ENCODE measurements at regions of chr9 and their contacts with region 1.

Region 1: DNA sequence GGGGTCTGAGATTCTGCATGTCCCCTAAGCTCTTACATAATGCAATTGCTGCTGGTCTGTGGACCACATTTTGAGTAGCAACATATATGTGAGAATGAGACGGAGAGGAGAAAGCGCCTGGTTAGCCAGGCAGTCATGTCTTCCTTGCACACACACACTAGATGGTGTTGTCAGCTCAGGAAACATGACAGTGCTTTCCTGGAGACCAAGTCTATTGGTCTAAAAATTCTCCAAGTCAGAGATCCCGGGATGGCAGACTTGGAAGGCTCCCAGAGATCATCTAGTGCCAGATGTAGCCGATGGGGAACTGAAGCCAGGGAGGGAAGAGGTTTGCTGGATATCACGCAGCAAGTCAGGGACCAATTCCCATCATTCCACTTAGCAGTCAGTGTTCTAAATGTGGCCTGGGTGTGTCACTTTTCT is 53.4 kb downstream of the GALNT12 start:
- DNase-seq: peak; percentile 55 to 88
- ATAC-seq: peak; percentile 69 to 91 (median 88)
- H3K4me3 ChIP-seq: no peak overlapping the region
- H3K27ac ChIP-seq: peak overlapping the region in 8 of 10 donors; percentile 20 to 90 (median 82)
- H3K4me1 ChIP-seq: peaks cover 2 to 64% (median 45%) of the 10 kb centered on the region in 9 donors
- H3K27me3 ChIP-seq: no peaks in the 10 kb centered on the region
- CTCF ChIP-seq: peak; percentile 17 to 89 (median 65)

Region 2: GRCh38 chr9:98906262-98907040 is 45.6 kb after region 1 on chr9:
- intact Hi-C with region 1: loop called in 4 of 10 experiments (anchors 5 to 10 kb)
- DNase-seq: peak; percentile 55 to 73
- ATAC-seq: peak in 2 of 8 donors; percentile 47 to 62
- H3K4me3 ChIP-seq: no peak overlapping the region
- H3K27ac ChIP-seq: peak overlapping the region in 9 of 10 donors; percentile 12 to 86 (median 75)
- H3K4me1 ChIP-seq: peaks cover 16 to 71% (median 50%) of the 10 kb centered on the region in 9 donors
- H3K27me3 ChIP-seq: no peaks in the 10 kb centered on the region
- CTCF ChIP-seq: no peak

Region 3: DNA sequence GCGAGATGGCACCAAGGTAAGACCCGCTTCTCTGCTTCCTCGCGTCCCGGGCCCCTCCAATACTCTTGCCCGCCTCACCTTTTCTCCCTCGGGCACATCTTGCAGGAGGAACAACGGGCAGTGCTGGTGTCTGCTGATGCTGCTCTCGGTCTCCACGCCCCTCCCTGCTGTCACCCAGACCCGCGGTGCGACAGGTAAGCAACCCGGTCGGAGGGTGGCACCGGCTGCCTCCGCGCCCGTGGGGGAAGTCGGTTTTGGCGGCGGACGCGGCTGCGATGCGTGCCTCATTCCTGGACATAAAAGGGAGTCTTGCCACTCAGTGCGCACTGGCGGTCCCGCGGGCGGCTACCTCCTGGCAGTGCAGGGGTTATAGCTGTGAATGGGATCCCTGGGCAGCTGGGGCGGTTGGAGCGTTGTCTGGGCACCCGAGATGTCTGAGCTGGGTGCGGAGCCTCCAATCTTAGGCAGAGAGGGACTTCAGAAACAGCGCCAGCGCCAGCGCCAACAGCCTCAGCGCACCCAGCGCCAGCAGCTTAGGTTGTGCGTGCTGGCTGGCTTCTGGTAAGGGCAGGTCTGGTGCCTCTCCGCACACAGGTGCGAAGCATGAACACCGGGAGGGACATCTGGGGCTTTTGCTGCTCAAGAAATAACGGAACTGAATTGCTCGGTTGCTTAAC is 83.3 kb after region 1 on chr9:
- intact Hi-C with region 1: loop called in 1 of 10 experiments (anchors 10 kb)
- DNase-seq: peak in 1 of 2 donors; percentile 34
- ATAC-seq: peak; percentile 21 to 61 (median 48)
- H3K4me3 ChIP-seq: peak overlapping the region; percentile 54 to 88 (median 74)
- H3K27ac ChIP-seq: peak overlapping the region; percentile 62 to 96 (median 86)
- H3K4me1 ChIP-seq: peaks cover 3 to 87% (median 35%) of the 10 kb centered on the region in 9 donors
- H3K27me3 ChIP-seq: peaks cover 0 to 53% (median 0%) of the 10 kb centered on the region in 7 donors
- CTCF ChIP-seq: no peak

Region 4: GRCh38 chr9:98998441-98999151 is 137.7 kb after region 1 on chr9:
- intact Hi-C with region 1: loop called in 9 of 10 experiments (anchors 1 to 10 kb)
- DNase-seq: peak; percentile 89 to 91
- ATAC-seq: peak; percentile 82 to 92 (median 88)
- H3K4me3 ChIP-seq: peak overlapping the region in 1 of 10 donors; percentile 10
- H3K27ac ChIP-seq: peak overlapping the region; percentile 58 to 92 (median 79)
- H3K4me1 ChIP-seq: peaks cover 26 to 75% (median 67%) of the 10 kb centered on the region in 9 donors
- H3K27me3 ChIP-seq: peaks cover 0 to 5% (median 0%) of the 10 kb centered on the region in 7 donors
- CTCF ChIP-seq: peak; percentile 82 to 97 (median 93)

Region 5: GRCh38 chr9:99130069-99130468 is 269.2 kb after region 1 on chr9:
- intact Hi-C with region 1: loop called in 1 of 10 experiments (anchors 10 kb)
- DNase-seq: no peak
- ATAC-seq: no peak
- H3K4me3 ChIP-seq: no peak overlapping the region
- H3K27ac ChIP-seq: no peak overlapping the region
- H3K4me1 ChIP-seq: peaks cover 0 to 50% (median 12%) of the 10 kb centered on the region in 9 donors
- H3K27me3 ChIP-seq: no peaks in the 10 kb centered on the region
- CTCF ChIP-seq: no peak

Region 6: GRCh38 chr9:99266255-99267023 is 405.6 kb after region 1 on chr9:
- intact Hi-C with region 1: no loop called
- DNase-seq: peak; percentile 68 to 74
- ATAC-seq: peak; percentile 55 to 92 (median 83)
- H3K4me3 ChIP-seq: no peak overlapping the region
- H3K27ac ChIP-seq: no peak overlapping the region
- H3K4me1 ChIP-seq: peaks cover 0 to 12% (median 6%) of the 10 kb centered on the region in 9 donors
- H3K27me3 ChIP-seq: no peaks in the 10 kb centered on the region
- CTCF ChIP-seq: peak; percentile 69 to 91 (median 88)

Measured in heart right ventricle (tissue), 16 donors.